ENCODE measurements at regions of chr17 and their contacts with region 1.

Region 1: DNA sequence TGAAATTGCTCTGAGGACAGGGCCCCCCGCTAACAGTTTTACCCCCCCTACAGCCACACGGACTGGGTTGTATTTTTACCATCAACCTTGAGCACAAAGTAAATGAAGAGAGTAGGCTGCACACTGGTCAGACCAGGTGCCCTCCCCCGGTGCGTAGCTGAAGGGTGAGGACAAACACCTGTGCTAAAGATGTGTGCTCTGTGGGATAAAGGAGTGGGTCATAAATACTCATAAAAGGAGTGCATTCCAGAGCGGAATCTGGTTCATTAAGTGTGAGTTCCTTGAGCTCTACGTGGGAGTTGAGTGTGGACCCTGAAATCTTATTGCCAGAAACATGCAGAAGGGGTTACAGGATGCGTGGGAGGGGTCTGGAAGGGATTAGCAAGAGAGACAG is 217.0 kb downstream of the CCDC182 start:
- DNase-seq: no peak
- ATAC-seq: no peak
- H3K4me3 ChIP-seq: no peak overlapping the region
- H3K27ac ChIP-seq: no peak overlapping the region
- H3K4me1 ChIP-seq: peaks cover 48% of the 10 kb centered on the region
- H3K27me3 ChIP-seq: no peaks in the 10 kb centered on the region
- CTCF ChIP-seq: no peak
- EP300 ChIP-seq: no peak
- POLR2A ChIP-seq: no peak
- RAD21 ChIP-seq: no peak

Region 2: GRCh38 chr17:57463103-57463851 is 64.8 kb before region 1 on chr17:
- CTCF ChIA-PET with region 1: interaction called, 3 read pairs
- POLR2A ChIA-PET with region 1: no interaction called
- RAD21 ChIA-PET with region 1: interaction called, 4 read pairs
- SMC1A ChIA-PET with region 1: interaction called, 8 read pairs
- in situ Hi-C with region 1: no loop called
- intact Hi-C with region 1: loop called (anchors 5 kb)
- DNase-seq: peak; percentile 97
- ATAC-seq: peak; percentile 91
- H3K4me3 ChIP-seq: peak overlapping the region; percentile 55
- H3K27ac ChIP-seq: peak overlapping the region; percentile 99
- H3K4me1 ChIP-seq: peaks cover 91% of the 10 kb centered on the region
- H3K27me3 ChIP-seq: no peaks in the 10 kb centered on the region
- CTCF ChIP-seq: no peak
- EP300 ChIP-seq: peak; percentile 95 to 96
- POLR2A ChIP-seq: peak; percentile 75
- RAD21 ChIP-seq: no peak

Region 3: GRCh38 chr17:57541472-57542394 is 13.7 kb after region 1 on chr17:
- CTCF ChIA-PET with region 1: interaction called, 4 read pairs
- POLR2A ChIA-PET with region 1: interaction called, 4 read pairs
- RAD21 ChIA-PET with region 1: interaction called, 4 read pairs
- SMC1A ChIA-PET with region 1: interaction called, 16 read pairs
- in situ Hi-C with region 1: no loop called
- intact Hi-C with region 1: no loop called
- DNase-seq: no peak
- ATAC-seq: no peak
- H3K4me3 ChIP-seq: no peak overlapping the region
- H3K27ac ChIP-seq: 0 out of 2 replicates have a peak overlapping the region, but pooled peaks have one; percentile 10
- H3K4me1 ChIP-seq: peaks cover 31% of the 10 kb centered on the region
- H3K27me3 ChIP-seq: no peaks in the 10 kb centered on the region
- CTCF ChIP-seq: no peak
- EP300 ChIP-seq: no peak
- POLR2A ChIP-seq: no peak
- RAD21 ChIP-seq: no peak

Region 4: DNA sequence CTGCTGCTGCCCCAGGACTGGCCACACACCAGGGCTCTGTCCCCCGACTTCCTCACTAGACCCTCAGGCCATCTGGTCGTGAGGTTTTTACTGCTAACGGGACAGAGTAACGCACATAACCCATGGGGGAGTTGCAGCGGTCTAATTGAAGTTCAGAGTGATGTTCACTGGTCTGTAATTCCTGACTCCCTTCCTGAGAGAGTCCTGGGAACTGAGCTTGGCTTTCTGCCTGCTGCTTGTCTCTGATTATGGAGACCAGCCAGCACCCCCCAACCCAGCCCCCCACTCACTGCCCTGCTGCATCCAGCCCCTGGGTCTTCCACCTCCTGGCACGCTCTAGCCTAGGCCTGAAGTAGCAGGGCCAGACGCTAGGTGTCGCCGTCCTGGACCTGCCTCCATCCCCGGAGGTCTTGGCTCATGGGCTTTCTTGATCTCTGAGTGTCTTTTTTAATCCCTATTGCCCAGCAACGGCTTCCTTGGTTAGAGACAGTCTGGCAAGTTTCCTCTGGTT is 24.1 kb after region 1 on chr17:
- CTCF ChIA-PET with region 1: interaction called, 16 read pairs
- POLR2A ChIA-PET with region 1: interaction called, 3 read pairs
- RAD21 ChIA-PET with region 1: interaction called, 3 read pairs
- SMC1A ChIA-PET with region 1: interaction called, 7 read pairs
- in situ Hi-C with region 1: no loop called
- intact Hi-C with region 1: no loop called
- DNase-seq: no peak
- ATAC-seq: peak; percentile 91
- H3K4me3 ChIP-seq: no peak overlapping the region
- H3K27ac ChIP-seq: peak overlapping the region; percentile 89
- H3K4me1 ChIP-seq: peaks cover 34% of the 10 kb centered on the region
- H3K27me3 ChIP-seq: no peaks in the 10 kb centered on the region
- CTCF ChIP-seq: peak; percentile 59 to 84 (median 77)
- EP300 ChIP-seq: no peak
- POLR2A ChIP-seq: peak; percentile 35; the same call in 1 of the 2 replicates
- RAD21 ChIP-seq: peak; percentile 64

Region 5: GRCh38 chr17:57570724-57571344 is 42.8 kb after region 1 on chr17:
- CTCF ChIA-PET with region 1: no interaction called
- POLR2A ChIA-PET with region 1: no interaction called
- RAD21 ChIA-PET with region 1: no interaction called
- SMC1A ChIA-PET with region 1: no interaction called
- in situ Hi-C with region 1: no loop called
- intact Hi-C with region 1: no loop called
- DNase-seq: no peak
- ATAC-seq: no peak
- H3K4me3 ChIP-seq: no peak overlapping the region
- H3K27ac ChIP-seq: no peak overlapping the region
- H3K4me1 ChIP-seq: no peaks in the 10 kb centered on the region
- H3K27me3 ChIP-seq: no peaks in the 10 kb centered on the region
- CTCF ChIP-seq: no peak
- EP300 ChIP-seq: no peak
- POLR2A ChIP-seq: no peak
- RAD21 ChIP-seq: no peak

Measured in GM12878 (cell line).